ENCODE measurements at regions of chrX and their contacts with region 1.

Region 1: DNA sequence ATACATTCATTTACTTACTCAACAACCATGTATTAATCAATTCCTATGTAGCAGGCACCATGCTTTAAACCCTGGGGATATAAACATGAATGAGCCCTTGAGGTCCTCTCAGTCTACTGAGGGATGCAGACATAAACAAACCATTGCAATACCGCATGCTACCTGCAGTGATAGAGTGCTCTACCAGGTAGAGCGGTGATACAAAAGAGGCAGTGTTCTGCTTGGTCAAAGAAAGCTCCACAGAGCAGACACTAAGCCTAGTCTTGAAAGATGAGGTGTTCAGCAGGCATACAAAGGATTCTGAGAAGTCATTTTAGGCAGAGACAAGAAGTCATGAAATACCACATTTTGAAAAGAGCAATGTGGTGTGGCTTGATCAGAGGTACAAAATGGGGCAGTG is 26.9 kb upstream of the AMOT start:
- DNase-seq: peak in 1 of 9 experiments; percentile 2
- ATAC-seq: no peak
- H3K4me3 ChIP-seq: no peak overlapping the region
- H3K4me3 Mint-ChIP-seq: no peak overlapping the region
- H3K27ac ChIP-seq: no peak overlapping the region
- H3K27ac Mint-ChIP-seq: no peak overlapping the region
- H3K4me1 ChIP-seq: no peaks in the 10 kb centered on the region
- H3K4me1 Mint-ChIP-seq: no peaks in the 10 kb centered on the region
- H3K27me3 ChIP-seq: no peaks in the 10 kb centered on the region
- H3K27me3 Mint-ChIP-seq: peaks cover 2% of the 10 kb centered on the region
- CTCF ChIP-seq: no peak

Region 2: GRCh38 chrX:112800971-112801714 is 66.4 kb before region 1 on chrX:
- CTCF ChIA-PET with region 1: no interaction called
- POLR2A ChIA-PET with region 1: no interaction called
- intact Hi-C with region 1: loop called in 1 of 2 experiments (anchors 10 kb)
- DNase-seq: no peak
- ATAC-seq: no peak
- H3K4me3 ChIP-seq: no peak overlapping the region
- H3K4me3 Mint-ChIP-seq: no peak overlapping the region
- H3K27ac ChIP-seq: no peak overlapping the region
- H3K27ac Mint-ChIP-seq: no peak overlapping the region
- H3K4me1 ChIP-seq: no peaks in the 10 kb centered on the region
- H3K4me1 Mint-ChIP-seq: no peaks in the 10 kb centered on the region
- H3K27me3 ChIP-seq: no peaks in the 10 kb centered on the region
- H3K27me3 Mint-ChIP-seq: no peaks in the 10 kb centered on the region
- CTCF ChIP-seq: no peak

Region 3: DNA sequence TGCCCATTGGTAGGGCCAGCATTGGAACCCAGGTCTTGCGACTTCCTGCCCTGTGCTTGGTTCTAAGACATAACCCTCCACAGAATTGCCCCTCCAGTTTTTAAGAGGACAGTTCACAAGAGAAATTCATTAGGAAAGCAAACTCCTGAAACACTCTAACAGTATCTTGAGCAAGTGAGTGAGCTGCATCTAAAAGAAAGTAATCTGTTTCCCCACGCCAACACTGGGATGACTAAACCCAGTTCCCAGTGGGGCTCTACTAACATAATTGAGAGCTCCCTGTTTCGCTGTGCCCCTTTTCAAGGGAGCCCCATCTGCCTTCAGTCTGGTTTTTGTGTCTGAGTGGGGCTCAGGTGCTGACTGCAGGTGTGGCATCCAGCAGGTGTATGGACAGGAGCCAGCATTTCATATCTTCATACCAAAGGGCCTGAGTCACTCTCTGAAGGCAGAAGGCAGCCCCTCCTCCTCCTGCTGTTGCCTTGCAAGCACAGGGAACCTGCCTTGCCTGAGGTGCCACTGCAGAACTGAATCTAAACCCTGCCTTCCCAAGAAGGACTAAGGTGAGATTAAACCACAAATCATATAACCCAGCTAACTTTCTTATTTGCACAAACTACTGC is 35.0 kb before region 1 on chrX:
- CTCF ChIA-PET with region 1: no interaction called
- POLR2A ChIA-PET with region 1: no interaction called
- intact Hi-C with region 1: no loop called
- DNase-seq: no peak
- ATAC-seq: no peak
- H3K4me3 ChIP-seq: no peak overlapping the region
- H3K4me3 Mint-ChIP-seq: no peak overlapping the region
- H3K27ac ChIP-seq: no peak overlapping the region
- H3K27ac Mint-ChIP-seq: no peak overlapping the region
- H3K4me1 ChIP-seq: no peaks in the 10 kb centered on the region
- H3K4me1 Mint-ChIP-seq: no peaks in the 10 kb centered on the region
- H3K27me3 ChIP-seq: no peaks in the 10 kb centered on the region
- H3K27me3 Mint-ChIP-seq: no peaks in the 10 kb centered on the region
- CTCF ChIP-seq: no peak